ENCODE measurements at regions of chr6 and their contacts with region 1.

Region 1: DNA sequence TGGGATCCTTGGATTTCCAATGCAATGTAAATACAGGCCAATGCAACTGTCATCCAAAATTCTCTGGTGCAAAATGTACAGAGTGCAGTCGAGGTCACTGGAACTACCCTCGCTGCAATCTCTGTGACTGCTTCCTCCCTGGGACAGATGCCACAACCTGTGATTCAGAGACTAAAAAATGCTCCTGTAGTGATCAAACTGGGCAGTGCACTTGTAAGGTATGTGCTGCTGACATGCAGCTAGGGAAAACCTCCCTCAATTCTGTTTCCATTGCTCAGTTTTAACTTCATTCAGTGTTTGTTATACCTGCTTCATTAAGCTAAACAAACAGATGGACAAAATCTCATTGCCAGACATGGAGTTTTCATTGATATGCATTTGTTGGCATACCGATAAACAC is 397.1 kb downstream of the ARHGAP18 start:
- DNase-seq: no peak
- ATAC-seq: no peak
- H3K4me3 ChIP-seq: no peak overlapping the region
- H3K4me3 Mint-ChIP-seq: no peak overlapping the region
- H3K27ac ChIP-seq: no peak overlapping the region
- H3K27ac Mint-ChIP-seq: no peak overlapping the region
- H3K4me1 ChIP-seq: no peaks in the 10 kb centered on the region
- H3K4me1 Mint-ChIP-seq: peaks cover 0 to 3% of the 10 kb centered on the region in 2 donors
- H3K27me3 ChIP-seq: no peaks in the 10 kb centered on the region
- H3K27me3 Mint-ChIP-seq: peaks cover 2 to 4% of the 10 kb centered on the region in 2 donors
- CTCF ChIP-seq: no peak

Region 2: DNA sequence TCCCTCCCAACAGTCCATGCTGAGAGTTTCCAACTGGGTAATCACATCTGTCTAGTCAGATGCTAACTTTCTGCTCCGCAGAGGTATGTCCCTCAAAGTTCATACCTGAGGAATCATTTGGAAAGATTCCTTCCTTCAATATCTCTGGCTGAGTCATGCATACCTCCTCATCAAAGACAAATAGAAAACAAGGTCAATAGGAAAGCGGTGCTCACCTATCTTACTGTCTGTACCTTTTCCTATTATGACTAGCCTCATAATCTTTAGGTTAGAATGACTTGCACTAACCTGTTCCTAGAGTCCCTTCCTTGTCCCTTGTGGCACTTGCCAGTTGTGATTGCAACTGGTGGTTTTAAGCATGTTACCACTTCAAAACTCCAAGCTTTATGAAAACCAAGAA is 714.3 kb before region 1 on chr6:
- intact Hi-C with region 1: loop called (anchors 5 kb)
- DNase-seq: no peak
- ATAC-seq: no peak
- H3K4me3 ChIP-seq: no peak overlapping the region
- H3K4me3 Mint-ChIP-seq: no peak overlapping the region
- H3K27ac ChIP-seq: no peak overlapping the region
- H3K27ac Mint-ChIP-seq: no peak overlapping the region
- H3K4me1 ChIP-seq: no peaks in the 10 kb centered on the region
- H3K4me1 Mint-ChIP-seq: no peaks in the 10 kb centered on the region
- H3K27me3 ChIP-seq: no peaks in the 10 kb centered on the region
- H3K27me3 Mint-ChIP-seq: no peaks in the 10 kb centered on the region
- CTCF ChIP-seq: no peak

Region 3: GRCh38 chr6:129297592-129297991 is 15.3 kb before region 1 on chr6:
- intact Hi-C with region 1: no loop called
- DNase-seq: no peak
- ATAC-seq: no peak
- H3K4me3 ChIP-seq: no peak overlapping the region
- H3K4me3 Mint-ChIP-seq: no peak overlapping the region
- H3K27ac ChIP-seq: no peak overlapping the region
- H3K27ac Mint-ChIP-seq: no peak overlapping the region
- H3K4me1 ChIP-seq: no peaks in the 10 kb centered on the region
- H3K4me1 Mint-ChIP-seq: peaks cover 4% of the 10 kb centered on the region in 2 donors
- H3K27me3 ChIP-seq: no peaks in the 10 kb centered on the region
- H3K27me3 Mint-ChIP-seq: peaks cover 4 to 12% of the 10 kb centered on the region in 2 donors
- CTCF ChIP-seq: no peak

Region 4: DNA sequence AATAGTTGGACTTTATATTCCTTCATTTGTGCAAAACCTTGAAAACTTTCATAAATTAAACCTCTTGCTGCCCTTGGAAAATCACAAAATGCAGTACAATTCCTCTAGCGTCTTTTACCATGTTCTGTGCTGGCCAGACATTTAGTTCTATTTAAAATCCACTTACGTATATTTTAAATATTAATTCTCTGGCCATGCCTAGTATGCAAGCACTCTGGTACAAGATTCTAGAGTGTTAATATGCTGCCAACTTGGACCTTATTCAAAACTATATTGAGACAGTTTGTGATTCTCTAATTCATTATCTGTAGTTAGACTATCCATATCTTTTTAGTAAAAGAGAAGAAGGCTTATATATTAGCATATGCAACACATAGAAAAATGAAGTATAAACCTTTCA is 69.0 kb after region 1 on chr6:
- intact Hi-C with region 1: no loop called
- DNase-seq: no peak
- ATAC-seq: no peak
- H3K4me3 ChIP-seq: no peak overlapping the region
- H3K4me3 Mint-ChIP-seq: no peak overlapping the region
- H3K27ac ChIP-seq: no peak overlapping the region
- H3K27ac Mint-ChIP-seq: no peak overlapping the region
- H3K4me1 ChIP-seq: no peaks in the 10 kb centered on the region
- H3K4me1 Mint-ChIP-seq: peaks cover 0 to 5% of the 10 kb centered on the region in 2 donors
- H3K27me3 ChIP-seq: no peaks in the 10 kb centered on the region
- H3K27me3 Mint-ChIP-seq: peaks cover 0 to 6% of the 10 kb centered on the region in 2 donors
- CTCF ChIP-seq: no peak

Region 5: GRCh38 chr6:130020907-130021629 is 708.2 kb after region 1 on chr6:
- intact Hi-C with region 1: no loop called
- DNase-seq: peak; percentile 65 to 93
- ATAC-seq: peak; percentile 70 to 83 (median 74)
- H3K4me3 ChIP-seq: peak overlapping the region; percentile 74
- H3K4me3 Mint-ChIP-seq: peak overlapping the region; percentile 99
- H3K27ac ChIP-seq: peak overlapping the region; percentile 80
- H3K27ac Mint-ChIP-seq: peak overlapping the region; percentile 89 to 92
- H3K4me1 ChIP-seq: peaks cover 4% of the 10 kb centered on the region
- H3K4me1 Mint-ChIP-seq: peaks cover 14 to 26% of the 10 kb centered on the region in 2 donors
- H3K27me3 ChIP-seq: no peaks in the 10 kb centered on the region
- H3K27me3 Mint-ChIP-seq: no peaks in the 10 kb centered on the region
- CTCF ChIP-seq: peak; percentile 70

Measured in natural killer cell (primary cell).